GM12878 (cell line): ENCODE measurements at regions of chr2 and their contacts with region 1.

Region 1: GRCh38 chr2:177164584-177165052 is 48.0 kb upstream of the HNRNPA3 start:
- DNase-seq: peak; percentile 56
- ATAC-seq: peak; percentile 64
- H3K4me3 ChIP-seq: peak overlapping the region; percentile 63
- H3K27ac ChIP-seq: peak overlapping the region; percentile 97
- H3K4me1 ChIP-seq: peaks cover 16% of the 10 kb centered on the region
- H3K27me3 ChIP-seq: no peaks in the 10 kb centered on the region
- CTCF ChIP-seq: peak; percentile 100; a peak in 5 of 6 replicates
- EP300 ChIP-seq: no peak; a peak in 1 of 4 replicates
- POLR2A ChIP-seq: no peak
- RAD21 ChIP-seq: peak; percentile 99

Region 2: GRCh38 chr2:177143444-177143843 is 21.2 kb before region 1 on chr2:
- CTCF ChIA-PET with region 1: interaction called, 90 read pairs
- POLR2A ChIA-PET with region 1: no interaction called
- RAD21 ChIA-PET with region 1: interaction called, 27 read pairs
- SMC1A ChIA-PET with region 1: interaction called, 54 read pairs
- in situ Hi-C with region 1: no loop called
- intact Hi-C with region 1: no loop called
- DNase-seq: no peak
- ATAC-seq: no peak
- H3K4me3 ChIP-seq: no peak overlapping the region
- H3K27ac ChIP-seq: no peak overlapping the region
- H3K4me1 ChIP-seq: no peaks in the 10 kb centered on the region
- H3K27me3 ChIP-seq: peaks cover 0 to 2% of the 10 kb centered on the region in 2 experiments; a peak in 1 of 4 replicates
- CTCF ChIP-seq: no peak
- EP300 ChIP-seq: no peak
- POLR2A ChIP-seq: no peak
- RAD21 ChIP-seq: no peak

Region 3: DNA sequence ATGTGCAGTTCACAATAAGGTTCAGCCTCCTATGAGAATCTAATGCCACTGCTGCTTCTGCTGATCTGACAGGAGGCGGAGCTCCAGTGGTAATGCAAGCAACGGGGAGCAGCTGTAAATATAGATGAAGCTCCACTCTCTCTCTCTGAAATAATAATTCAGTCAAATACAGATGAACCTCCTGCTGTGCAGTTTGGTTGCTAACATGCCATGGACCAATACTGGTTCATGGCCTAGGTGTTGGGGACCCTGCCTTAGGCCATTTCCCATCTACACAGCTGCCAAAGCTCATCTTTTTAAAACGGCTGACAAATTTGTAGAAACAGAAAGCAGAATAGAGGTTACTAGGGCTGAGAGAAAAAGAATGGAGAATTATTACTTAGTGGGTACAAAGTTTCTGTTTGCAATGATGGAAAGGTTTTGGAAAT is 37.3 kb after region 1 on chr2:
- CTCF ChIA-PET with region 1: interaction called, 128 read pairs
- POLR2A ChIA-PET with region 1: interaction called, 9 read pairs
- RAD21 ChIA-PET with region 1: interaction called, 65 read pairs
- SMC1A ChIA-PET with region 1: interaction called, 82 read pairs
- in situ Hi-C with region 1: no loop called
- intact Hi-C with region 1: no loop called
- DNase-seq: no peak
- ATAC-seq: no peak; the same call in 2 of the 3 replicates
- H3K4me3 ChIP-seq: no peak overlapping the region
- H3K27ac ChIP-seq: no peak overlapping the region
- H3K4me1 ChIP-seq: peaks cover 6% of the 10 kb centered on the region; the same call in 1 of the 2 replicates
- H3K27me3 ChIP-seq: no peaks in the 10 kb centered on the region
- CTCF ChIP-seq: no peak
- EP300 ChIP-seq: no peak
- POLR2A ChIP-seq: no peak
- RAD21 ChIP-seq: no peak

Region 4: DNA sequence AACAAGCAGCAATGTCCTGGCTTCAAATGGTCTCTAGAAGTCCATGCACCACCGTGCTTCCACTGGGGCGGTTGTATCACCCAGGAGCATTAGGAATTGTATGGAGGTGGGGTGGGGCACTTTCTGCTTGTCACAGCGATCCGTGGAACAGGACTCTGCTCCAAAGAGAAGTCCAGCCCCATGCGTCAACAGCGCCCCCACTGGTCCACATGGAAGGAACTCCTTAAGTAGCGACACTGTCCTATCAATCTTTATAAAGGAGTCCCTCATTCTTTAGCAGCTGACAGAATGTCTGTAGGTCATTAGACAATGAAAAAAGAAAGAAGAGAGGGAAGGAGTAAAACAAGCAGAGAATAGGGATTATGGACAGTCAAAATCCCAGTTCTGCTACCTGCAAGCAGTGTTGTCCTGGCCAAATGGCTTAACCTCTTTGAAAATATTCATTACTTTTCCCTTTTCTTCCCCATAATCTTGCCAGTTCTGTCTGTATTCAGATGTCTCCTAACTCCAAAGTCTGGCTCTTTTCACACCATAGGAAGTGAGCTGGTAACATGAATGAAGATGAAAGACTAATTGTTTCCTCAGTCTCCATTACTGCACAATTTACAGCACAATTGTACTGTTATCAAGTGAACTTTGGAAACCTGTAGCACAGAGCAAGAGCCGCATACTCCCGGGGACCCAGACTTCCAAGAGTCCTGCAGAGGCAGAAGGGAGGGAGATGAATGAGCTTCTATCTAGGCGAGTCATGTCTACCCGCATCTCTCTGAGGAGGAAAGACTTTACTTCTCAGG is 90.0 kb after region 1 on chr2:
- CTCF ChIA-PET with region 1: interaction called, 213 read pairs
- POLR2A ChIA-PET with region 1: interaction called, 3 read pairs
- RAD21 ChIA-PET with region 1: interaction called, 18 read pairs
- SMC1A ChIA-PET with region 1: interaction called, 140 read pairs
- in situ Hi-C with region 1: no loop called
- intact Hi-C with region 1: no loop called
- DNase-seq: no peak
- ATAC-seq: peak; percentile 9; the same call in 1 of the 3 replicates
- H3K4me3 ChIP-seq: no peak overlapping the region
- H3K27ac ChIP-seq: no peak overlapping the region
- H3K4me1 ChIP-seq: no peaks in the 10 kb centered on the region
- H3K27me3 ChIP-seq: no peaks in the 10 kb centered on the region
- CTCF ChIP-seq: peak in 2 of 3 experiments; percentile 26 to 41; a peak in 4 of 6 replicates
- EP300 ChIP-seq: no peak
- POLR2A ChIP-seq: no peak
- RAD21 ChIP-seq: 0 out of 2 replicates have a peak, but pooled peaks have one; percentile 9

Region 5: DNA sequence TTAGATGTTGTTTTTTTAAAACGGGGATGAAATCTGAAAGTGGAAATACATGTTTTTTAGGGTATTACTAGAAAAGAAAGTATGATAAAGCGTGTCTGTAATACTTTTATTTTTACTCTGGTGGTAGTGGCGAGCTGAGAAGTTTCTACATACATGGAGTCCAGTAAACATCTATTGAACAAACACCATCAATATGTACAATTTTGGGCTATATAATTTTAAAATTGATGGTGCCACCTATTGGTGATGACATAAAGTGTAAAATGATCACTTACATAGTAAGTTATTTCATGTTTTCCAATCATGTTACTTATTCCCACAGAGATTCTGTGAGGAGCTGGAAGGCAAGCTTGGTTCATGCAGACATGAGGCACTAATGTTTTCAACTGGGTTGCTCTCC is 131.4 kb after region 1 on chr2:
- CTCF ChIA-PET with region 1: interaction called, 162 read pairs
- POLR2A ChIA-PET with region 1: interaction called, 4 read pairs
- RAD21 ChIA-PET with region 1: interaction called, 38 read pairs
- SMC1A ChIA-PET with region 1: interaction called, 126 read pairs
- in situ Hi-C with region 1: no loop called
- intact Hi-C with region 1: loop called (anchors 10 kb)
- DNase-seq: no peak
- ATAC-seq: peak; percentile 86
- H3K4me3 ChIP-seq: no peak overlapping the region
- H3K27ac ChIP-seq: no peak overlapping the region
- H3K4me1 ChIP-seq: peaks cover 5% of the 10 kb centered on the region; the same call in 1 of the 2 replicates
- H3K27me3 ChIP-seq: no peaks in the 10 kb centered on the region
- CTCF ChIP-seq: peak in 2 of 3 experiments; percentile 36 to 48; a peak in 2 of 6 replicates
- EP300 ChIP-seq: no peak
- POLR2A ChIP-seq: no peak
- RAD21 ChIP-seq: peak; percentile 45

Region 6: DNA sequence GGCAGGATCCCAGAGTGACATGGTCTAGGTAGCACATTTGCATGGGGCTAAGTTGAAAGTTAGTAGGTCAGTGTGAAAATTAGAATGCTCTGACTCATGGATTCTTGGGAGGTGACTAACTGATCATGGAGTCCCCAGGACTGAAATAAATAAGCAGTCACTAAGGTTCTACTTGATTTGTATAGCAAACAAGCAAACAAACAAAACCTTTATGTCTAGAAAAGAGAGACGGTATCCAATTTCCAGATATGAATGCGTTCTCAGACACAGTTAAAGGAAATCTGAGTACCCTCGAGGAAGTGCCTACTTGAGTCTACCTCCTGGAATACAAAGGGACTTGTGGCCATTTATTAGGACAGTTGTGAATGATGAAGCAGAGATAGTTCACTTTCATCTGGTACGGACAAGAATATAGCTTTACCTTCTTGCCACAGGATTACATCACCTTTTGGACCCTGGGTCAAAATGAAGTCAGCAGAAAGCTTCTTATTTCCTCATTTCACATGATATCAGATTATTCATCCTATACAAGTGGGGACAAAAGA is 173.6 kb after region 1 on chr2:
- CTCF ChIA-PET with region 1: interaction called, 163 read pairs
- POLR2A ChIA-PET with region 1: interaction called, 9 read pairs
- RAD21 ChIA-PET with region 1: interaction called, 102 read pairs
- SMC1A ChIA-PET with region 1: interaction called, 117 read pairs
- in situ Hi-C with region 1: loop called (anchors 5 kb)
- intact Hi-C with region 1: no loop called
- DNase-seq: no peak
- ATAC-seq: no peak
- H3K4me3 ChIP-seq: no peak overlapping the region
- H3K27ac ChIP-seq: no peak overlapping the region
- H3K4me1 ChIP-seq: no peaks in the 10 kb centered on the region
- H3K27me3 ChIP-seq: no peaks in the 10 kb centered on the region
- CTCF ChIP-seq: no peak
- EP300 ChIP-seq: no peak
- POLR2A ChIP-seq: no peak
- RAD21 ChIP-seq: no peak

Region 7: GRCh38 chr2:177604271-177605065 is 439.9 kb after region 1 on chr2:
- CTCF ChIA-PET with region 1: interaction called, 17 read pairs
- POLR2A ChIA-PET with region 1: no interaction called
- RAD21 ChIA-PET with region 1: interaction called, 14 read pairs
- SMC1A ChIA-PET with region 1: interaction called, 10 read pairs
- in situ Hi-C with region 1: no loop called
- intact Hi-C with region 1: no loop called
- DNase-seq: no peak
- ATAC-seq: peak; percentile 58
- H3K4me3 ChIP-seq: no peak overlapping the region
- H3K27ac ChIP-seq: no peak overlapping the region
- H3K4me1 ChIP-seq: no peaks in the 10 kb centered on the region
- H3K27me3 ChIP-seq: no peaks in the 10 kb centered on the region
- CTCF ChIP-seq: peak; percentile 58 to 63 (median 59); a peak in 5 of 6 replicates
- EP300 ChIP-seq: no peak
- POLR2A ChIP-seq: no peak
- RAD21 ChIP-seq: peak; percentile 63